ENCODE measurements at regions of chr16 and their contacts with region 1.

Region 1: DNA sequence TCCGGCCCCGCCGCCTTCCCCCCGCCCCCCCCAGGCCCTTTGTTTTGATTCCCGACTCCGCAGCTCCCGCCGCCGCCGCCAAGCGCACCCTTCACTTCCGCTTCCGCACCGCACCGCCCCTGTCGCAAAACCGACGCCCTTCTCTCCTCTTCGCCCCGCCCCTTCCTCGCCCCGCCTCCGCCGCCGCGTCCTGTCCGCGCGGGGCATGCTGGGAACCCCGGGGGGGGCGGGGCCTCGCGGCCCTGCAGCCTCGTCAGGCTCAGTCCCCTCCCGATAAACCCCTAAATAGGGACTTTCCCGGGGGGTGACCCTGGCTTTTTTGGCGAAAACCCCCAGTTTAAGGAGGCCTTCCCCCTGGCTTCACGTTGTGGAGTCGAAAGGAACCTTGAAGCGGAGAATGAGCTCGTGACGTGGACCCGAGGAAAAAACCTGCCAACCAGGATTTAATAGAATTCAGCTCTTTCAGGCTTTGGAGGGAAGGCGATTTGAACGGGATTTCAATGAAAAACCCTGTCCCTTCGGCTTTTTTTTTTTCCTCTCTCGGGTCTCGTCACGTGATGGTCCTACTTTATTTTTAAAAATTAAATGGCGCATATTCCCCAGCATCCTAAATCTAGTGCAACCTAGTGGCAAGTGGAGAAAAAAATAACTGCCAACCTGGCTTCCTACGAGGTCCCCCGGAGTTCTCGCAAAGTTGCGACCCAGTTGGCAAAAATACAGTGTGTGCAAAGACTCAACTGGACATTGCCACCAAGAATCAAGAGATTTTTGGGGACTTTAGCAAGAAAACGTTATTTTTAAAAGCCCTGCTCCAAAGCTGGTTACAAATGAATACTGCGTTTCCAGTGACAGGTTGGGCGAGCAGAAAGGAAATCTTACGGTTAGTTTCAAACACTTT is at the start of gene MARF1:
- DNase-seq: peak; percentile 94
- H3K4me3 ChIP-seq: peak within 1 kb of the TSS; percentile 61 to 98 (median 95)
- H3K27ac ChIP-seq: peak within 1 kb of the TSS; percentile 99
- H3K4me1 ChIP-seq: peaks cover 18% of the 10 kb centered on the region
- H3K27me3 ChIP-seq: peaks cover 0 to 2% of the 10 kb centered on the region in 2 experiments
- CTCF ChIP-seq: peak; percentile 32 to 42
- POLR2A ChIP-seq: peak; percentile 94
- total RNA-seq, gene MARF1: 54.3 and 58.5 TPM in 2 replicates

Region 2: GRCh38 chr16:15482068-15482747 is 161.1 kb before region 1 on chr16:
- CTCF ChIA-PET with region 1: no interaction called
- POLR2A ChIA-PET with region 1: no interaction called
- dilution Hi-C with region 1: no loop called
- intact Hi-C with region 1: loop called (anchors 5 kb)
- DNase-seq: peak; percentile 95
- H3K4me3 ChIP-seq: no peak overlapping the region
- H3K27ac ChIP-seq: peak overlapping the region; percentile 10
- H3K4me1 ChIP-seq: peaks cover 12% of the 10 kb centered on the region
- H3K27me3 ChIP-seq: no peaks in the 10 kb centered on the region
- CTCF ChIP-seq: no peak
- POLR2A ChIP-seq: no peak

Region 3: DNA sequence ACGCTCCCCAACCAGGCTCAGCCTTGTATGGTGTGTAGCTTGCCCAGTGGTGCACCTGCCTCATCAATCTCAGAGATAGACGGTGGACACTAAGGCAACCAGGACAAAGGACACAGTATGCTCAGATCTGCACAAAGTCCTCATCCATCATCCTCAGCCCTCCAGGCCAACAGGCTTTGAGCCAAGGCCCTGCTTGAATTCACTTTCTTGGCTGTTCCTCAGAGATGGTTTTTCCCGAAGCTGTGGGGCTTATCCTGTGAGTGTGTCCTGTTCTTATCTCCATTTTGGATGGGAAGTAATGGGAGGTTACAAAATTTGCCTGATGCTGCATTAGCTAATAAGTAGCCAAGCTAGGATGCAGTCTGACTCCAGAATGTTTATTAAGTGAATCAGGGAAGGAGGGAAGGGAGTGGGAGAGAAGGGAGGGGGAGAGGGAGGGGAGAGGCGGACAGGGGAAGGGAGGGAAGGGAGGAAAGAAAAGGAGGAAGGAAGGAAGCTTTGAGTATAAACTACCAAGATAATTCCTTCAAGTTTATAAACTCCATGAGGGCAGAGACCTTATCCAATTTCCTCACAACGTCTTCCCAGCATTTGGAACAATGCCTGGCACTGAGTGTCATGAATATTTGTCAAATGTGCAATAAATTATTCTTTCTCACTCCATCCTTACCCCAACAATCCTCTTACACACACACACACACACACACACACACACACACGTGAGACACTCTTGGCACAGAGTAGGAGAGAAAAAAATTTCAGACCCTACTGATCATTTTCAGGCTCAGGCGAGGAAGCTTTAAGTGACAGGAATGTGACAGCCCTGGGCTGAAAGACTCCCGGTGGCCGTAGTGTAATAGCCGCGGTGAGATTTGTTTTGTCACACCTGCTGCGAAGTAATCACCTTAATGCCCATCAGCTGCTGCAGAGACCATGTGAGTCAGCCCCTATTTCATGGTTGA is 124.6 kb before region 1 on chr16:
- CTCF ChIA-PET with region 1: no interaction called
- POLR2A ChIA-PET with region 1: no interaction called
- dilution Hi-C with region 1: no loop called
- intact Hi-C with region 1: loop called (anchors 5 kb)
- DNase-seq: peak; percentile 85
- H3K4me3 ChIP-seq: no peak overlapping the region
- H3K27ac ChIP-seq: no peak overlapping the region
- H3K4me1 ChIP-seq: peaks cover 25% of the 10 kb centered on the region
- H3K27me3 ChIP-seq: no peaks in the 10 kb centered on the region
- CTCF ChIP-seq: no peak
- POLR2A ChIP-seq: no peak

Region 4: GRCh38 chr16:15672514-15673167 is 29.3 kb after region 1 on chr16:
- CTCF ChIA-PET with region 1: interaction called, 3 read pairs
- POLR2A ChIA-PET with region 1: interaction called, 3 read pairs
- dilution Hi-C with region 1: no loop called
- intact Hi-C with region 1: loop called (anchors 1 kb)
- DNase-seq: peak; percentile 99
- H3K4me3 ChIP-seq: peak overlapping the region in 1 of 3 experiments; percentile 26
- H3K27ac ChIP-seq: peak overlapping the region; percentile 99
- H3K4me1 ChIP-seq: peaks cover 21% of the 10 kb centered on the region
- H3K27me3 ChIP-seq: no peaks in the 10 kb centered on the region
- CTCF ChIP-seq: no peak
- POLR2A ChIP-seq: peak; percentile 77

Region 5: GRCh38 chr16:15682105-15682570 is 38.8 kb after region 1 on chr16:
- CTCF ChIA-PET with region 1: interaction called, 18 read pairs
- POLR2A ChIA-PET with region 1: no interaction called
- dilution Hi-C with region 1: no loop called
- intact Hi-C with region 1: loop called (anchors 1 kb)
- DNase-seq: peak; percentile 84
- H3K4me3 ChIP-seq: no peak overlapping the region
- H3K27ac ChIP-seq: peak overlapping the region; percentile 42
- H3K4me1 ChIP-seq: peaks cover 5% of the 10 kb centered on the region
- H3K27me3 ChIP-seq: no peaks in the 10 kb centered on the region
- CTCF ChIP-seq: peak; percentile 49 to 68
- POLR2A ChIP-seq: no peak

Region 6: GRCh38 chr16:15704545-15704987 is 61.3 kb after region 1 on chr16:
- CTCF ChIA-PET with region 1: interaction called, 9 read pairs
- POLR2A ChIA-PET with region 1: no interaction called
- dilution Hi-C with region 1: no loop called
- intact Hi-C with region 1: loop called (anchors 1 kb)
- DNase-seq: peak; percentile 73
- H3K4me3 ChIP-seq: no peak overlapping the region
- H3K27ac ChIP-seq: no peak overlapping the region
- H3K4me1 ChIP-seq: peaks cover 28% of the 10 kb centered on the region
- H3K27me3 ChIP-seq: no peaks in the 10 kb centered on the region
- CTCF ChIP-seq: peak; percentile 79 to 87
- POLR2A ChIP-seq: no peak

Region 7: GRCh38 chr16:15732416-15732815 is 89.1 kb after region 1 on chr16:
- CTCF ChIA-PET with region 1: no interaction called
- POLR2A ChIA-PET with region 1: no interaction called
- dilution Hi-C with region 1: no loop called
- intact Hi-C with region 1: no loop called
- DNase-seq: no peak
- H3K4me3 ChIP-seq: no peak overlapping the region
- H3K27ac ChIP-seq: no peak overlapping the region
- H3K4me1 ChIP-seq: no peaks in the 10 kb centered on the region
- H3K27me3 ChIP-seq: no peaks in the 10 kb centered on the region
- CTCF ChIP-seq: no peak
- POLR2A ChIP-seq: no peak